Activated CD8-positive, alpha-beta T cell treated with anti-CD3 and anti-CD28 coated beads, Interleukin-2, amount 10 ng/mL, durations not matched to agents 7 days and 5 days (primary cell): ENCODE measurements at regions of chr19 and their contacts with region 1.

Region 1: DNA sequence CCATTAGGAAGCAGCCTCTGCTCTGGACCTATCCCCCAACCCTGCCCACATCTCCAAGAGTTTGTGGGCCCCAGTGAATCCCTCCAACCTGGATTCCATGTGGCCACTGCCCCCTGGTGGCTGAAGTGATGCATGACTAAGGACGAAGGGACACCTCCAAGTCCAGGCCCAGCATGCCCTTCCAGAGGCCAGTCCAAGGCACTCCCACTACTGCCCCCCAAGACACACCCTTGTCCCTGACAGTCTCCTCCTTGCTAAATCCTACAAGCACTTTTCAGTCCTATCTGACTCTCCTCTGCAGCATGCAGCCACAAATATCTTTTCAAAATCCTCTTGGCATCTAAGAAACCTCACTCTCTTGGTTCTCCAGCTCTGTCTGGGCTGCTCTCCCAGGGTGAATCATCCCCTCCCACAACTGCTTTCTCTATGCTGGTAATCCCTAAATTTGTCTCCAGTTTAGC is 33.0 kb downstream of the DEDD2 start:
- DNase-seq: peak; percentile 74
- ATAC-seq: peak; percentile 57
- H3K4me3 Mint-ChIP-seq: no peak overlapping the region
- H3K27ac Mint-ChIP-seq: peak overlapping the region; percentile 65
- H3K4me1 Mint-ChIP-seq: peaks cover 36% of the 10 kb centered on the region
- H3K27me3 Mint-ChIP-seq: peaks cover 5% of the 10 kb centered on the region

Region 2: GRCh38 chr19:41844601-41845000 is 339.8 kb before region 1 on chr19 and contains the start of gene LYPD4:
- CTCF ChIA-PET with region 1: no interaction called
- POLR2A ChIA-PET with region 1: no interaction called
- DNase-seq: no peak
- ATAC-seq: no peak
- H3K4me3 Mint-ChIP-seq: no peak within 1 kb of the TSS
- H3K27ac Mint-ChIP-seq: no peak within 1 kb of the TSS
- H3K4me1 Mint-ChIP-seq: no peaks in the 10 kb centered on the region
- H3K27me3 Mint-ChIP-seq: peaks cover 9% of the 10 kb centered on the region
- total RNA-seq, gene LYPD4: not detected

Region 3: DNA sequence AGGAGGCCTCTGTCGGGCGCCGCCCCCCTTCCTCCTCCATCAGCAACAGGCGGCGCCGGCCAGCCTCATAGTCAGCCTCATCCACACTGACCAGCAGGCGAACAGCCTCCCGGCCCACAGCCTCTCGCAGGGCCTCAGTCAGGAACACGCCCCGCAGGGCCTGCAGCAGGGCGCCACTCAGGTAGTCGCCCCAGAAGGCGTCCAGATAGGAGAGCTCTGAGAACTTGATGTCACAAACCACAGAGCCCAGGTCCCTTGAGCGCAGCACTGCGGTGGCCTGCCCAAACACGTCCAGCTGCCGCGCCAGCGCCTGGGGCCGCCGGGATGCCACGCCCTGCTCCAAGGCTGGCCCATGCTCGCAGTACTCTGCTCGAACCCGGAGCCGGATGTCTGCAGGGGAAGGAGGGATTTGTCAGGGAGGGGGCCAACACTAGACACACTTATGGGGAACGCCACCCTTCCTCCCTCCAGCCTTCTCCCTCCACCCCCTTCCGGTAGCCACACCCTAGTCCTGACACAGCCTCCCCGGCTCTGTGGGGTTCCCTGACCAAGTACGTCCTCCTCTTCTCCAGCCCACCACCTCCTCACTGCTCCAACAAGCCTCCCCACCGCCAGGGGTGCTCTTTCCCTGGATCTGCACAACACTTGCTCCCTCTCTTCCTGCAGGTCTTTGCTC is 15.1 kb after region 1 on chr19:
- CTCF ChIA-PET with region 1: interaction called, 20 read pairs
- POLR2A ChIA-PET with region 1: interaction called, 9 read pairs
- DNase-seq: peak; percentile 92
- ATAC-seq: peak; percentile 74
- H3K4me3 Mint-ChIP-seq: peak overlapping the region; percentile 72
- H3K27ac Mint-ChIP-seq: peak overlapping the region; percentile 96
- H3K4me1 Mint-ChIP-seq: peaks cover 80% of the 10 kb centered on the region
- H3K27me3 Mint-ChIP-seq: no peaks in the 10 kb centered on the region

Region 4: DNA sequence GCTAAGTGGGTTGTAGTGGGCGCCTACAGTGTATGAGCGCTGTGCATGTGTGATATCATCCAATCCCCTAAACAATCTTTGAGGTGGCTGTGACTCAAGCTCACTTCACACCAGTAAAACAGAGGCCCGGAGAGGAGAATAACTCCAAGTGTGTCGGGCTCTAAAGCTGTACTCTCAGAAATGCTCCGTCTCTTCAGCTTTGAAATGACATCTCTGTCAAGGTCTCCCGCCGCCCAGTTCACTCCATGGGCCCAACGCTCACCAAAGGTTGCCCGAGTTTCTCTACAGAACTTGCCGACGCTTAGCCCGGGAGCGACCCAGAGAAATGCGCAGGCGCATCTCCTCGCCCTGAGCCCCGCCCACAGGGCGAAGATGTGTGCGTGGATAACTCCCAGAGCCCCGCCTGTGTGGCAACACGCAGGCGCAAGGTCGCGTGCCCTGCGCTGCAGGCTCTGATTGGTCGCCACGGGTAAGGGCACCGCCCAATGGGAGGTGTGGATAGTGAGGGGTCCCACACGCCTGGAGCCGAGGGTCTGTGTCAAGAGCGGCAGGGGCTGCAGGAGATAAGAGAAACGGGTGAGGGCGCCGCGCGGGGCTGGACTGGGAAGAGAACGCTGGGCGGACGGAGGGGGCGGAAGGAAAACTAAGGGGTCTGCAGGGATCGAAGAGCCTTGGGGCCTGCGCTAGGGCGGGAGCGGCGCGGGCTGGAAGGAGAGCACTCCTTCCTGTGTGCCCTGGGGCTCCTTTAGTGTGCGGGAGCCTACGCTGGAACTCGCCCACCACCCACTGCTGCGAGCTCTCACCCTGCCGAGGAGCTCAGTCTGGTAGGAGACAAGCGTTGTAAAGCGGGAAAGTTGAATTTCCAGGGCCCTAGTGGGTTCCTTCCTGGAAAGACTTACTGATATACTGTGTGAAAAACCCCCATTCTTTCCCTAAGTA is 35.6 kb after region 1 on chr19 and contains the start of gene ZNF526:
- CTCF ChIA-PET with region 1: interaction called, 10 read pairs
- POLR2A ChIA-PET with region 1: no interaction called
- DNase-seq: peak; percentile 98
- ATAC-seq: peak; percentile 90
- H3K4me3 Mint-ChIP-seq: peak within 1 kb of the TSS; percentile 92
- H3K27ac Mint-ChIP-seq: peak within 1 kb of the TSS; percentile 93
- H3K4me1 Mint-ChIP-seq: peaks cover 54% of the 10 kb centered on the region
- H3K27me3 Mint-ChIP-seq: no peaks in the 10 kb centered on the region
- total RNA-seq, gene ZNF526: 19.5 to 21.5 TPM